AG04449 (cell line): ENCODE measurements at regions of chr1 and their contacts with region 1.

Region 1: DNA sequence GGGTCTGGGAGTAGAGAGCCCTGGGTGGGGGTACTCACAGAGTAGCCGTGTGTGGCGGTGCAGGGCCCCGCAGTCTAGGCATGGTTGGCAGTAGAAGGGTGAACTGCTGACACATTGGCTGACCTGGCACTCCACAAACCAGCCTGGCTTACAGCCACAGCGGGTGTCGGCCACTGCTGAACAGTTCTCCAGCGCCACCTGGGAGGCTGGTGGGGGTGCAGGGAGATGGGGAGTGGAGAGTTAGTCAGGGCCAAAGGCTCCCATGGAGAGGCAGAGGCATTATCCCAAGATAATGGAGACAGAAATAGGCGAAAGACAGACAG is 1.5 kb downstream of the TNFRSF25 start:
- DNase-seq: no peak
- H3K4me3 ChIP-seq: no peak overlapping the region
- CTCF ChIP-seq: no peak

Region 2: GRCh38 chr1:6475381-6476133 is 11.1 kb after region 1 on chr1:
- CTCF ChIA-PET with region 1: interaction called, 25 read pairs
- POLR2A ChIA-PET with region 1: interaction called, 3 read pairs
- DNase-seq: no peak
- H3K4me3 ChIP-seq: no peak overlapping the region
- CTCF ChIP-seq: peak; percentile 90